ENCODE measurements at regions of chr15 and their contacts with region 1.

Region 1: DNA sequence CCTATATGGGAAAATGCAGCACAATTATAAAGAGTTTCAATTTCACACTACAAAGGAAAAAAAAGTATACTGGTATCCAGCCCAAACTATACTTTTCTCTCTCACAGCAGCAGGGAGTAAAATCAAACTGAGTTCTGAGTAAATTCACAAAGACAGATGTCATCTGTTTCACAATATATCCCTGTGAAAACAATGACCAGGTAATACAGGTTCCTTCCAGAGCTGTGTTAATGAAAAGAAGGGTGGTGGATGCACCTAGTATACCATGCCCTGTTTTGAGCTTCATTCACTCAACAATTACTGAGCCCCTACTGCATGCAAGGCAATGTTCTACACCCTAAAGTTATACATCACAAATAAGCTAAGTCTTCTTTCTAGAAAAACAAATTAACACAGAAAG is 108.5 kb downstream of the TJP1 start:
- DNase-seq: no peak
- ATAC-seq: no peak
- H3K4me3 ChIP-seq: no peak overlapping the region
- H3K4me3 Mint-ChIP-seq: no peak overlapping the region
- H3K27ac ChIP-seq: no peak overlapping the region
- H3K27ac Mint-ChIP-seq: no peak overlapping the region
- H3K4me1 ChIP-seq: no peaks in the 10 kb centered on the region
- H3K4me1 Mint-ChIP-seq: no peaks in the 10 kb centered on the region
- H3K27me3 ChIP-seq: no peaks in the 10 kb centered on the region
- H3K27me3 Mint-ChIP-seq: peaks cover 2% of the 10 kb centered on the region
- CTCF ChIP-seq: no peak

Region 2: GRCh38 chr15:29698030-29698701 is 15.6 kb before region 1 on chr15:
- CTCF ChIA-PET with region 1: no interaction called
- POLR2A ChIA-PET with region 1: no interaction called
- intact Hi-C with region 1: no loop called
- DNase-seq: no peak
- ATAC-seq: no peak
- H3K4me3 ChIP-seq: no peak overlapping the region
- H3K4me3 Mint-ChIP-seq: no peak overlapping the region
- H3K27ac ChIP-seq: no peak overlapping the region
- H3K27ac Mint-ChIP-seq: no peak overlapping the region
- H3K4me1 ChIP-seq: no peaks in the 10 kb centered on the region
- H3K4me1 Mint-ChIP-seq: no peaks in the 10 kb centered on the region
- H3K27me3 ChIP-seq: no peaks in the 10 kb centered on the region
- H3K27me3 Mint-ChIP-seq: no peaks in the 10 kb centered on the region
- CTCF ChIP-seq: no peak

Region 3: DNA sequence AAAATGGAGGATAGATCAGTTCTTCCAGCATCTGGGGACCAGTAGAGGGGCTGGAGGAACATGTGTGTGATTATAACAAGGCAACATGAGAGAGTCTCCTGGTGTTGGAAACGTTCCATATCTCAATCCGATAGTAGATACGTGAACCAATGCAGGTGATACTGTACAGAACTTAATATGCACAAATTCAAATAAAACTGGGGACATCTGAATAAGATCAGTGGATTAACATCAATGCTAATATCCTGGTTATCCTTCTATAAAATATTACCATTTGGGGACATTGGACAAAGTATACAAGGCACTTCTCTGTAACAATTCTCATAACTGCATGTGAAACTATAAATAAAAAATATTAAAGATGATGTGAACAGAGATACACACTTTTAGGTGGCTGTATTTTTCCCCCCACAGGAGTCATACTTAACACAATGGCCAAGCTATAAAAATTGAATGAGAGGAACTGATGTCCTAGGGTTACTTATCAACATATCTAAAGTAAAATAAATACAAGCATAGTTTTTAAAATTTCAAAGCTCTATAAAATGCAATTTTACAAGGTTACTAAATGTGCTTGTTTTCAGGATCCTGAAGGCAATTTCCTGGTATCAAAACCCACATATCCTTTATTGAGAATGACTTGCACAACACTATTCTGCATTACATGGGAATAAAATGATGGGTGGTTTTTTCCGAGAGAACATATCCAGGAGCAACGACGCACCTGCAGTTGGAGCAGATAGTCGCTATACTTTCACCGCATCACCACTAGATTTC is 139.6 kb after region 1 on chr15:
- CTCF ChIA-PET with region 1: no interaction called
- POLR2A ChIA-PET with region 1: interaction called, 12 read pairs
- intact Hi-C with region 1: no loop called
- DNase-seq: no peak
- ATAC-seq: no peak
- H3K4me3 ChIP-seq: no peak overlapping the region
- H3K4me3 Mint-ChIP-seq: no peak overlapping the region
- H3K27ac ChIP-seq: no peak overlapping the region
- H3K27ac Mint-ChIP-seq: no peak overlapping the region
- H3K4me1 ChIP-seq: no peaks in the 10 kb centered on the region
- H3K4me1 Mint-ChIP-seq: no peaks in the 10 kb centered on the region
- H3K27me3 ChIP-seq: no peaks in the 10 kb centered on the region
- H3K27me3 Mint-ChIP-seq: peaks cover 7% of the 10 kb centered on the region
- CTCF ChIP-seq: no peak

Measured in CD8-positive, alpha-beta T cell (primary cell).